Activated CD4-positive, alpha-beta memory T cell treated with anti-CD3 and anti-CD28 coated beads for 36 hours (primary cell): ENCODE measurements at regions of chr3 and their contacts with region 1.

Region 1: DNA sequence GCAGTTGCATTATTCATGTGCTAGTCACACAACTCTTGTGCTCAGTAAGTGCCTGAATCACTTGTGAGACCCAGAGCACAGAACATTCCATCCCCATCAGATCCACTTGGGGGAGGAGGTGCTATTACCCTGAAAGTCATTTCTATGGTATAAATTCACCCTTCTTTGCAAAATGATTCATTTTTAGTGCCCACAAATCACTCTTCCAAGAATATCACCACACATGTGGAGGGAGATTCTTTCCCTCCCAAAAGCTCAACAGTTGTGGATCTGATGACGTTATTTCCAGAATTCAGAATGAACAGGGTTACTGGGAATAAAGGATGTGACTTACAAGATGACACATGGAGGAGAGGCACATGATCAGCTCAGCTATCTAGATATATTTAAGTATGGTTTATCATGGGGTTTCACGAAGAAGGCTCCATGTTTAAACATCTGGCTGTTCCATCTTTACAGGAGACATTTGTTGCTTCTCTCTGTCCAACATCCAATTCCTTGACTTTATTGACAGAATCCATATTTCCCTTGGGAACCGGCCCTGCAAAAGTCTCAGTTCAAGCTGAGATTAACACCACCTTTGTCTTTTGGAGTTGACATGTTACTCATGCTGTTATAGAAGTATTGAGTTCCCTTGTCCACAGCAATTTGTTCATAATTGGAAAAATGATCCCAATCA is 214.2 kb upstream of the PROK2 start:
- DNase-seq: peak; percentile 56
- H3K4me3 Mint-ChIP-seq: no peak overlapping the region
- H3K27ac Mint-ChIP-seq: peak overlapping the region; percentile 85
- H3K4me1 Mint-ChIP-seq: peaks cover 45% of the 10 kb centered on the region
- H3K27me3 Mint-ChIP-seq: peaks cover 12% of the 10 kb centered on the region

Region 2: DNA sequence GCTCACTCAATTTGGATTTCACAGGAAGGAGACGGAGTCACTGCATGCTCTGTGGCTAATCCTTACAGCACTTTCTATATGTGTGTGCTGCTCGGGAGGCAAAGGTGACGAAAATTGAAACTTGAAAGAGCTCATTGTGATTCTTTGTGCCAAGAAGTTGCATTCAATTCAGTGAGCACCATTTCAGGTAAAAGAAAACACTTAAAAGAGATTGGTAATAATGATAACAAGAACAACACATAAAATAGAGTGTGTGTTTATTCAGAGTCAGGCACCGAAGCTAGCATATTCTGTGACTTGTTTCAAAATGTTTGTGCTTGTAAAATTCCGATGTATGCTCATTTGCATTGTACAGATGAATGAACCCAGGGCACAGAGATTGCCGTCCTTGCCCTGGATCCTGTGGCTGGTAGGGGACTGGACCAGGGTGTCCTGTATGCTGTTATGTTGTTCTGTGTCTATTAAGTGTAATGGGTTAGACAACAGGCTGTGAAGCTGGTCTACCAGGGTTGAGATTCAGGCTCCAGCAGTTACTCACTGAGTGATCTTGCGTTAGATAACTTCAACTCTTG is 20.9 kb before region 1 on chr3:
- CTCF ChIA-PET with region 1: interaction called, 8 read pairs
- POLR2A ChIA-PET with region 1: interaction called, 18 read pairs
- intact Hi-C with region 1: loop called (anchors 1 kb)
- DNase-seq: peak; percentile 67
- H3K4me3 Mint-ChIP-seq: peak overlapping the region; percentile 38
- H3K27ac Mint-ChIP-seq: peak overlapping the region; percentile 88
- H3K4me1 Mint-ChIP-seq: peaks cover 44% of the 10 kb centered on the region
- H3K27me3 Mint-ChIP-seq: peaks cover 19% of the 10 kb centered on the region

Region 3: GRCh38 chr3:71984843-71985613 is 14.1 kb before region 1 on chr3:
- CTCF ChIA-PET with region 1: interaction called, 8 read pairs
- POLR2A ChIA-PET with region 1: interaction called, 6 read pairs
- intact Hi-C with region 1: loop called (anchors 1 kb)
- DNase-seq: peak; percentile 70
- H3K4me3 Mint-ChIP-seq: peak overlapping the region; percentile 13
- H3K27ac Mint-ChIP-seq: peak overlapping the region; percentile 83
- H3K4me1 Mint-ChIP-seq: peaks cover 42% of the 10 kb centered on the region
- H3K27me3 Mint-ChIP-seq: peaks cover 9% of the 10 kb centered on the region

Region 4: GRCh38 chr3:72100601-72101187 is 101.6 kb after region 1 on chr3:
- CTCF ChIA-PET with region 1: no interaction called
- POLR2A ChIA-PET with region 1: no interaction called
- intact Hi-C with region 1: loop called (anchors 5 kb)
- DNase-seq: peak; percentile 97
- H3K4me3 Mint-ChIP-seq: peak overlapping the region; percentile 78
- H3K27ac Mint-ChIP-seq: peak overlapping the region; percentile 70
- H3K4me1 Mint-ChIP-seq: peaks cover 22% of the 10 kb centered on the region
- H3K27me3 Mint-ChIP-seq: peaks cover 3% of the 10 kb centered on the region

Region 5: GRCh38 chr3:72127844-72128243 is 128.7 kb after region 1 on chr3:
- CTCF ChIA-PET with region 1: no interaction called
- POLR2A ChIA-PET with region 1: no interaction called
- intact Hi-C with region 1: no loop called
- DNase-seq: no peak
- H3K4me3 Mint-ChIP-seq: no peak overlapping the region
- H3K27ac Mint-ChIP-seq: no peak overlapping the region
- H3K4me1 Mint-ChIP-seq: peaks cover 13% of the 10 kb centered on the region
- H3K27me3 Mint-ChIP-seq: no peaks in the 10 kb centered on the region